ENCODE measurements at regions of chr3 and their contacts with region 1.

Region 1: DNA sequence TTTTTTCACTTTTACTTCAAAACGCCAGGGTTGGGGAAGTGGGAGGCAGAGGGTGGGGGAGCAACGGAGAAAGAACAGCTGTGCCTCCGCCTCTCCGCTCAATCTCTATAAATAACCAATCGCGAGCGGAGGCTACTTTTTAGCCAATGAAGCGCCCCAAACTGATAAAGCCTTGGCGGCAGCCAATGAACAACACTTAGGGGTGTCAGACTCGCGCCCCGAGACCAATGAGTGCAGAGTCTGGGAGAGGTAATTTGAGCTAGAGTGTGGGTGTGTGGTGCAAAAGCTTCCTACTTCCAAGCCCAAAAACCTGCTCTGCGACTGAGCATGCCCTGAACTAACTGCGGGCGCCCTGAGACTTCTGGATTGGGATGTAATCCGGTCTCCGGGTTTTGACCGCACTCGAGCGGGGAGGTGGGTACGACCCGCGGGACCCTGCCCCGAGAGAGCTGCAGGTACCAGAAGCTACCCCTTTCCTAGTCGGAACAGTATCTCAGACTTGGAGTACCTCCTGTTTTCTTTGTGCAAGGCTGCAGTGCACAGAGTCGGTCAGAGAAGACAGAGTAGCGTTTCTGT is 800 bp upstream of the RAP2B start:
- DNase-seq: peak; percentile 99
- H3K4me3 ChIP-seq: peak overlapping the region; percentile 87
- H3K27ac ChIP-seq: peak overlapping the region; percentile 82
- H3K4me1 ChIP-seq: peaks cover 29% of the 10 kb centered on the region
- CTCF ChIP-seq: no peak

Region 2: GRCh38 chr3:153043729-153044328 is 117.4 kb before region 1 on chr3:
- CTCF ChIA-PET with region 1: no interaction called
- POLR2A ChIA-PET with region 1: no interaction called
- intact Hi-C with region 1: loop called (anchors 1 kb)
- DNase-seq: no peak
- H3K4me3 ChIP-seq: no peak overlapping the region
- H3K27ac ChIP-seq: no peak overlapping the region
- H3K4me1 ChIP-seq: no peaks in the 10 kb centered on the region
- CTCF ChIP-seq: no peak

Region 3: GRCh38 chr3:153172796-153173757 is 11.9 kb after region 1 on chr3:
- CTCF ChIA-PET with region 1: interaction called, 3 read pairs
- POLR2A ChIA-PET with region 1: interaction called, 33 read pairs
- intact Hi-C with region 1: no loop called
- DNase-seq: no peak
- H3K4me3 ChIP-seq: no peak overlapping the region
- H3K27ac ChIP-seq: no peak overlapping the region
- H3K4me1 ChIP-seq: no peaks in the 10 kb centered on the region
- CTCF ChIP-seq: no peak

Region 4: DNA sequence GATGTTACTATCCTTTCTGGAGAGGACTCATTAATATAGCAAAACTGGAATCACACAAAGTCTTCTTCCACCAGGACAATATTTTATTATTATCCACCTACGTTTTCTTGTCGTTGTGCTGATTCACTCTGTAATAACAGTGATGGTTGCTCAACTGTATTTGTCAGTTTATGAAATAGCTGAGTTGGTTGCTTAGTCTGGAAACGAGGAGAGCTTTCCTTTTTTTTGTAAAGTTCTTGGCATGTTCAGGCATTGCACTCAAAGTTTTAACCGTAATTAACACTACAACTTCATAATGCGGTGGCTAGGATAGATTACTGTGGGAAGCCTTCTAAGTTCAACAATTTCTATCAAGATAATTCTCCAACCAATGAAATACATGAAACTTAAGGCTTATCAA is 132.0 kb after region 1 on chr3:
- CTCF ChIA-PET with region 1: no interaction called
- POLR2A ChIA-PET with region 1: no interaction called
- intact Hi-C with region 1: no loop called
- DNase-seq: no peak
- H3K4me3 ChIP-seq: no peak overlapping the region
- H3K27ac ChIP-seq: no peak overlapping the region
- H3K4me1 ChIP-seq: no peaks in the 10 kb centered on the region
- CTCF ChIP-seq: no peak

Region 5: GRCh38 chr3:153628591-153628990 is 467.4 kb after region 1 on chr3:
- CTCF ChIA-PET with region 1: no interaction called
- POLR2A ChIA-PET with region 1: interaction called, 13 read pairs
- intact Hi-C with region 1: loop called (anchors 2 kb)
- DNase-seq: peak; percentile 51
- H3K4me3 ChIP-seq: peak overlapping the region; percentile 60
- H3K27ac ChIP-seq: peak overlapping the region; percentile 85
- H3K4me1 ChIP-seq: peaks cover 98% of the 10 kb centered on the region
- CTCF ChIP-seq: no peak

Region 6: DNA sequence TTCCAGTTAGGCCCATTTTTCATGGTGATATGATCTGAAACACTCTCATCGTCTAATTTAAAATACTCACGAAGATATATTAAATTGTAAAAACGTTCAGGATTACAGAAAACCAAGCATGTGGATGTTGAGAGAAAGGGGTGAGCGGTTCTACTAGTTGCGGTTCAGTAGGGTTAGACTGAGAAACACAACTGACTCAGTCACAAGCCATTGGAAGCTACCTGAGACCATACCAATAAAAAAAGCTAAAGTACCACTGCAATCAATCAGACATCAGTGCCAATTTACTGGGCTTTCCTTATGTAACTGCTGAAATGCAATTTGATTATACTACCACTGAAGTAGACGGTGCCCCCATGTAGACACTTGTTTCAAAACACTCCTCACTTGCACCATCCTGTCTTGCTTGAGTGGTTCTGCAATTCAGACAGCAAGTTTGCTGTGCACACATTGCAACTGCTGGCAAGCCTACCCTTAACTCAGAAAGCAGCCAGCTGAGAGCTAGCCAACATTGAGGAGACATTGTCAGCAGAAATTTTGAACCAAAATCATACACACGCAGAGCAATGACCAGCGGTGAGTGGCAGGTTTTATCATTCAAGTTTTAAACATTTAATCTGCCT is 591.3 kb after region 1 on chr3:
- CTCF ChIA-PET with region 1: no interaction called
- POLR2A ChIA-PET with region 1: interaction called, 23 read pairs
- intact Hi-C with region 1: no loop called
- DNase-seq: peak; percentile 85
- H3K4me3 ChIP-seq: peak overlapping the region; percentile 54
- H3K27ac ChIP-seq: peak overlapping the region; percentile 83
- H3K4me1 ChIP-seq: peaks cover 75% of the 10 kb centered on the region
- CTCF ChIP-seq: no peak

Region 7: GRCh38 chr3:154323891-154324738 is 1162.9 kb after region 1 on chr3 and contains the start of gene DHX36:
- CTCF ChIA-PET with region 1: no interaction called
- POLR2A ChIA-PET with region 1: no interaction called
- intact Hi-C with region 1: loop called (anchors 5 kb)
- DNase-seq: peak; percentile 93
- H3K4me3 ChIP-seq: peak within 1 kb of the TSS; percentile 85
- H3K27ac ChIP-seq: peak within 1 kb of the TSS; percentile 75
- H3K4me1 ChIP-seq: peaks cover 46% of the 10 kb centered on the region
- CTCF ChIP-seq: no peak; the same call in 1 of the 2 replicates
- total RNA-seq, gene DHX36: 40.6 and 48.1 TPM in 2 replicates

Measured in OCI-LY7 (cell line).